Common myeloid progenitor, CD34-positive (primary cell): ENCODE measurements at regions of chr5 and their contacts with region 1.

Region 1: DNA sequence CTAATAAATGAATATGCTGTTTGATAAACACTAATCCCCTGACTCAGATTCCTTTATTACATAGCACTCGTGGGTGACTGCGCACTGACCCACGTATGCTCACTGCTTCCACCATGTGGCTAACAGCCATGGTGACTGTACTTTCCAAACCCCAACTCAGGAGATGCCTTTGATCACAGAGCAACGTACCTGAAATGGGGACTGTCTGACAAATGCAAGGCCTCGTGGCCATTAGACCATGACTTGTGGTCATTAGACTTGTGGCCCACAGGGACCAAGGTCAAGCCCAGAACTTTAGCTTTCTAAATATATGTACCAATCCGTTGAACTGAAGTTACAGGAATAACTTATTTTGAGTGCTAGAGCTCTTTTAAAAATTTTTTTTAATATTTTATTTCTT is 46.6 kb downstream of the CYFIP2 start:
- DNase-seq: peak; percentile 65 to 87 (median 84)
- H3K4me3 ChIP-seq: no peak overlapping the region
- H3K27ac ChIP-seq: no peak overlapping the region
- H3K4me1 ChIP-seq: no peaks in the 10 kb centered on the region
- H3K27me3 ChIP-seq: no peaks in the 10 kb centered on the region

Region 2: GRCh38 chr5:157148734-157149615 is 163.5 kb before region 1 on chr5:
- CTCF ChIA-PET with region 1: interaction called, 39 read pairs
- POLR2A ChIA-PET with region 1: no interaction called
- DNase-seq: peak; percentile 78 to 89 (median 84)
- H3K4me3 ChIP-seq: no peak overlapping the region
- H3K27ac ChIP-seq: no peak overlapping the region
- H3K4me1 ChIP-seq: peaks cover 0 to 3% (median under 1%) of the 10 kb centered on the region in 4 experiments
- H3K27me3 ChIP-seq: no peaks in the 10 kb centered on the region

Region 3: DNA sequence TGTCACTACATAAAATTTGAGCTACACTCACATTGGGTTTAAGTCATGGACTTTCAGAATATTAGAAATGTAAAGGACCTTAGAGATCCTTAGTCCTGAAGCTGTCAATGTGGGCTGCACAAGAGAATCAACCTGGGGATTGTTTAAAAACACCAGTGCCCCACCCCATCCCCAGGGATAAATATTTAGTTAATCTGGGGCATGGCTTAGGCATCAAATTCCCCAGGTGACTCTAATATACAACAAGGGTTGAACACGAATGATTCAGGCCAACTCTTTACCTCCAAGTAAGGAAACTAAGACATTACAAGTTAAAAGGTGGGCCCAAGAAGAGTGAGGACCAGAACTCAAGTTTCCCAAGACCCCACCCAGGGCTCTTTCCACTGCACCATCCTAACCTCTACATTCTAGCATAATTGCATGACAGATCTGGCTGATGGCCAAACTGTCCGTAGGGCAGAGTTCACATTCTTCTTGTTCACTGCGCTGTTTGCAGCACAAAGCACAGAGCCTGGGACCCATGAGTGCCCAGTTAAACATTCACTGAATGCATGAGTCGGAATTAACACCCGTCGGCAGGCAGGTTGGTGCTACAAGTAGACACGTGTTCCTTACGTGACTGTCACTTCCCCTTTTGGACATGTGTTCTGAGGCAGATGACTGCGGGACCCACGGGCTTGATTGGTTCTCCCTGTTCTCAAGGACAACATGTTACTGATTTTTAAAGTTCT is 21.3 kb before region 1 on chr5:
- CTCF ChIA-PET with region 1: interaction called, 16 read pairs
- POLR2A ChIA-PET with region 1: no interaction called
- DNase-seq: peak in 2 of 3 donors; percentile 67 to 78
- H3K4me3 ChIP-seq: no peak overlapping the region
- H3K27ac ChIP-seq: no peak overlapping the region
- H3K4me1 ChIP-seq: no peaks in the 10 kb centered on the region
- H3K27me3 ChIP-seq: no peaks in the 10 kb centered on the region

Region 4: DNA sequence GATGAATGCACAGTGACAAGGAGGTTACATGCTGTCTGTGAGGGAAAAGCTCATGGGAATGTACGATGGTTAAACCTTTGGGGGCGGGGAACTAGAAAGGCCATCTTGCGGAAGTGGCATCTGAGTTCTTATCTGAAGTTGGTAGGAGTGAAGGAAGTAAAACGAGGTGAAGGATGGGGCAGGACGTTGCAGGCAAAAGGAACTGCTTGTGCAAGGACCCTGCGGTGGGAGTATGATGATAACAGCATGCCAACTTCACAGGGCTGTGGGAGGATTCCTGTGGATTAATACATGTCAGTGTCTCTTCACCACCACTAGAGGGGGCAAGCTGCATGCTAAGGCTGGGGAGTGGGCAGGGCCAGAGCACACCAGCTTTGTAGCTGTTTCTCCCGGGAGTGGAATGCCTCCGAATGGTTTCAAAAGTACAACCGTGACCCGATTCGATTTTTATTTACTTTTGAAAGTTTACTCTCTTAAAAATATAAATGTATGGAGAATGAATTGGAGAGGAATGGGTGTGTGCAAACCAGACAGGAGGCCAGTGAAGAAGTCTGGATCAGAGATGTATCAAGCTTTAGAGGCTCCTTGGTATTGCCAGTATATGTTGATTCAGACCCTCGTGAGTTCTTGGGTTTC is 15.9 kb after region 1 on chr5:
- CTCF ChIA-PET with region 1: interaction called, 15 read pairs
- POLR2A ChIA-PET with region 1: no interaction called
- DNase-seq: peak; percentile 80 to 85 (median 81)
- H3K4me3 ChIP-seq: peak overlapping the region in 1 of 7 experiments; percentile 21
- H3K27ac ChIP-seq: no peak overlapping the region
- H3K4me1 ChIP-seq: peaks cover 0 to 3% (median 0%) of the 10 kb centered on the region in 4 experiments
- H3K27me3 ChIP-seq: no peaks in the 10 kb centered on the region

Region 5: GRCh38 chr5:157502143-157502647 is 189.7 kb after region 1 on chr5:
- CTCF ChIA-PET with region 1: no interaction called
- POLR2A ChIA-PET with region 1: no interaction called
- DNase-seq: peak; percentile 14 to 81 (median 73)
- H3K4me3 ChIP-seq: no peak overlapping the region
- H3K27ac ChIP-seq: no peak overlapping the region
- H3K4me1 ChIP-seq: peaks cover 7 to 26% (median 14%) of the 10 kb centered on the region in 4 experiments
- H3K27me3 ChIP-seq: no peaks in the 10 kb centered on the region